ENCODE measurements at regions of chr3 and their contacts with region 1.

Region 1: DNA sequence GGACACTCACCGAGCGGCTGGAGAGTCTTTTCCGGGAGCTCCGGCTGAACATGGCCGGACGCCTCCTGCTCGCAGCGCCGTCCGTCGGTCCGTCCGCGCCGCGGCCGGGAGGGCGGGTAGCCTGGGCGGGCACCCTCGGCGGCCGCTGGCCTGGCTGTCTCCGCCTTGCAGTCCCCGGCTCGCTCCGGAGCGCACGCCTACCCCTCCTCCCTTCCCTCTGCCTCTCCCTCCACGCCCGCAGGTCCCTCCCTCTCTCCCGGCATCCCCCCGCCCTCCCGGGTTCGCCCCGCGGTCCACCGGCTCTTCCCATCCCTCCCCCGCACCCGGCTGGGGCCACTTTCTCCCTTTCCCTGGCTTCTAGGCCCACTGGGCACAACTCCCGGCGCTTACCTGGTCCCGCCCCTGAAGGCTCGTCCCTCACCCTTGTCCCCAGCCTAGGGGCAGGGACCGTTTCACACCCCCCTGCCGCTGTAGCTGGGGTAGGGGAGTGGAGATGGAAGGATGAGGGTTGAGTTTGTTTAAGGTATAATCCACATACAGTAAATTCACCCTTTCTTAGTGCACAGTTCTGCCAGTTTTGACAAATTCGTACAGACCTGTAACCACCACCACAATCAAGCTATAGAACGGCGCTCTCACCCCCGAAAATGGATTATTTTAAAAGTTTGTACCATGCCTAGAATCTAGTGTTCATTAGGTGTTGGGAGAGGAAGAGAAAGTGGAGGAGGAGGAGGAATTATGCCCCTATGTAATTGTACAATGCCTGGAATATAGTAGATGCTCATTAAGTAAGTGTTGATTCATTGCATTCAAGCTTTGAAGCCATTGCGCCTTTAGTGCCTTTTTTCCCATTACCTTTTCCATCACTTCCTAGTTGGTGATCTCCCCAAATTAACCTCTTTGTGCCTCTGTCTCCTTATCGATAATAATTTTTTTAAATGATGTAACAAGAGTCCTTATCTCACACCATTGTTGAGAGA is 220.3 kb upstream of the PRICKLE2 start:
- DNase-seq: peak; percentile 24
- CTCF ChIP-seq: no peak

Region 2: GRCh38 chr3:64291345-64291744 is 154.3 kb before region 1 on chr3:
- CTCF ChIA-PET with region 1: no interaction called
- POLR2A ChIA-PET with region 1: no interaction called
- DNase-seq: no peak
- CTCF ChIP-seq: no peak

Region 3: GRCh38 chr3:64426551-64426950 is 19.1 kb before region 1 on chr3:
- CTCF ChIA-PET with region 1: interaction called, 12 read pairs
- POLR2A ChIA-PET with region 1: no interaction called
- DNase-seq: no peak
- CTCF ChIP-seq: no peak

Region 4: GRCh38 chr3:64470436-64470835 is 24.8 kb after region 1 on chr3:
- CTCF ChIA-PET with region 1: no interaction called
- POLR2A ChIA-PET with region 1: no interaction called
- DNase-seq: no peak
- CTCF ChIP-seq: no peak